Mammary epithelial cell (primary cell): ENCODE measurements at regions of chrX and their contacts with region 1.

Region 1: DNA sequence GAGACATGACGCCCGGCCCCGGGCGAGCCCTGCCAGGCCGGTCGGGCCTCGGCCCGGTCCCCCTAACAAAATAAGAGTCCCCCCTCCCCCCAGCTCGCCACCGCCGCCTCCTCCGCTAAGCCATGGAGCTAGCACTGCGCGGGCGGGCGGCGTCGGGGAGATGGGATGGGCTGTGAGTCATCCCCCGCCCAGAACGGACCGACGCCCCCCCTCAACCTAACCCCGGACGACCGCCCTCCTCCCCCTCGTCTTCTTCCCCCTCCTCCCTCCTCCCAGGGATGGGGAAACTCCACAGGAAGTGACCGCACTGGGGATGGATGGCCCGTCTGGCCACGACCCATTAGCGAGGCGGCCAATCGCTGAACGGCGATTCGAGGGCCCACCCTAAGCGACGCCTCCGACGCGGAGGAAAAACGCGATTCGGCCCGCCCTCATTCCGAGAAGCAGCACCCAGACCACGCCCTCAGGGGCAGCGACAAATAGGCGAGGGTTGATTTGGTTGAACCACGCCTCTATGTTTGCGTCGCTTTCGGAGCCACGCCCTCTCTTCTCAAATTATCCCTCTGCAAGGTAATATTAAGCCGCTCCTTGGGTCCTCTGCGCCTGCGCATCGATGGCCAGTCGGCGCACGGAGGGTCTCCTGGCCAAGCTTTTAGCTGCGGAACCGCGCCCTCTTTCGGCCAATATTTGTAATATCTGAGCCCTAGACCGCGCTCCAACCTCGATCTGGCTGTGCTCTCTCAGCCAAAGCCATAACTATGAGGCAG is at the start of gene TFE3:
- DNase-seq: peak; percentile 98
- H3K4me3 ChIP-seq: peak within 1 kb of the TSS; percentile 39 to 71 (median 51)
- H3K27ac ChIP-seq: peak within 1 kb of the TSS; percentile 73
- H3K4me1 ChIP-seq: peaks cover 12% of the 10 kb centered on the region
- H3K27me3 ChIP-seq: no peaks in the 10 kb centered on the region
- CTCF ChIP-seq: peak; percentile 39 to 58
- total RNA-seq, gene TFE3: 30.5 to 61.1 TPM

Region 2: GRCh38 chrX:48761674-48762471 is 281.5 kb before region 1 on chrX and contains the start of gene GLOD5:
- CTCF ChIA-PET with region 1: no interaction called
- dilution Hi-C with region 1: no loop called
- in situ Hi-C with region 1: no loop called
- intact Hi-C with region 1: loop called (anchors 2 kb)
- DNase-seq: peak; percentile 57
- H3K4me3 ChIP-seq: no peak within 1 kb of the TSS
- H3K27ac ChIP-seq: no peak within 1 kb of the TSS
- H3K4me1 ChIP-seq: no peaks in the 10 kb centered on the region
- H3K27me3 ChIP-seq: no peaks in the 10 kb centered on the region
- CTCF ChIP-seq: peak; percentile 27 to 57
- total RNA-seq, gene GLOD5: not detected

Region 3: GRCh38 chrX:48891402-48892288 is 151.8 kb before region 1 on chrX:
- CTCF ChIA-PET with region 1: no interaction called
- dilution Hi-C with region 1: no loop called
- in situ Hi-C with region 1: no loop called
- intact Hi-C with region 1: loop called (anchors 1 kb)
- DNase-seq: peak; percentile 85
- H3K4me3 ChIP-seq: peak overlapping the region; percentile 48 to 51 (median 49)
- H3K27ac ChIP-seq: no peak overlapping the region
- H3K4me1 ChIP-seq: peaks cover 4% of the 10 kb centered on the region
- H3K27me3 ChIP-seq: no peaks in the 10 kb centered on the region
- CTCF ChIP-seq: peak; percentile 24 to 55

Region 4: GRCh38 chrX:48911412-48912182 is 131.8 kb before region 1 on chrX and contains the start of gene SLC35A2:
- CTCF ChIA-PET with region 1: no interaction called
- dilution Hi-C with region 1: no loop called
- in situ Hi-C with region 1: no loop called
- intact Hi-C with region 1: no loop called
- DNase-seq: peak; percentile 80
- H3K4me3 ChIP-seq: peak within 1 kb of the TSS; percentile 59 to 77 (median 73)
- H3K27ac ChIP-seq: peak within 1 kb of the TSS; percentile 72
- H3K4me1 ChIP-seq: no peaks in the 10 kb centered on the region
- H3K27me3 ChIP-seq: no peaks in the 10 kb centered on the region
- CTCF ChIP-seq: no peak
- total RNA-seq, gene SLC35A2: 26.2 to 39.9 TPM

Region 5: DNA sequence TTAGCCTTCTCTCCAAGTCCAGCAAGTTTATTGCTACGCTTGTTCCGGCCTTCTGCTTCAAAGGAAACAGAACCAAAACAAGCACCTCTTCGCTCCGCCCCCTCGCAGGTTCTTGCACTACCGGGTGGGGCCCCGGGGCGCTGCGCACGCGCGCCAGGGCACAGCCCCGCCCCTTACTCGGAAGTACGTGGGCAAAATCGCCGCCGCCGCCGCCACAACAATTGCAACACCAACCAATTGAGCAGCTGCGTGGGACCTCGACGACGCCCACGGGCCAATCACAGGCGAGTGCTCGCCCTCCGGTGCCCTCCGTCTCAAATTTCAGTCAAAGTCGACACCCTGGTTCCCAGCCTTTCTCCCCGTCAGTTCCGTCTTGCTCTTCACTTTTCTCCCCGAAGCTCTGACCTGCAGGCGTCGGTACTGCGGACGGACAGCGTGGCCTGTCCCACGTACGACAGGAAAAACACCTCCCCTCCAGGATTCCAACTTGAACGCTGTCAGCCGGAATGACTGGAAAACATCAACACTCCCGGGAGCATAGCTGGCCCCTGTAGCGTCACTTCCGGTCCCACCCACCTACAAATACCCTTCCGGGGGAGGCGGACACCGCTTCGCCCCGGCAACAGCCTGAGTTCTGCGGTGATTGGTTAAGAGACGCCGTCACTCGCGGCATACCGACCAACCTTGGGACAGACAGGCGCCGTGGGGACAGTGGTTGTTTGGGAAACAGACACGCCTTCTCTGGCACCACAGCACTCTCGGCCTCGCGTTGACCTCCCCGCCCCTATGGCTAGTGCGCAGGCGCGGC is 85.4 kb before region 1 on chrX:
- CTCF ChIA-PET with region 1: no interaction called
- dilution Hi-C with region 1: loop called (anchors 5 kb)
- in situ Hi-C with region 1: no loop called
- intact Hi-C with region 1: loop called (anchors 2 kb)
- DNase-seq: peak; percentile 95
- H3K4me3 ChIP-seq: peak overlapping the region; percentile 67 to 75 (median 74)
- H3K27ac ChIP-seq: peak overlapping the region; percentile 97
- H3K4me1 ChIP-seq: no peaks in the 10 kb centered on the region
- H3K27me3 ChIP-seq: no peaks in the 10 kb centered on the region
- CTCF ChIP-seq: no peak

Region 6: DNA sequence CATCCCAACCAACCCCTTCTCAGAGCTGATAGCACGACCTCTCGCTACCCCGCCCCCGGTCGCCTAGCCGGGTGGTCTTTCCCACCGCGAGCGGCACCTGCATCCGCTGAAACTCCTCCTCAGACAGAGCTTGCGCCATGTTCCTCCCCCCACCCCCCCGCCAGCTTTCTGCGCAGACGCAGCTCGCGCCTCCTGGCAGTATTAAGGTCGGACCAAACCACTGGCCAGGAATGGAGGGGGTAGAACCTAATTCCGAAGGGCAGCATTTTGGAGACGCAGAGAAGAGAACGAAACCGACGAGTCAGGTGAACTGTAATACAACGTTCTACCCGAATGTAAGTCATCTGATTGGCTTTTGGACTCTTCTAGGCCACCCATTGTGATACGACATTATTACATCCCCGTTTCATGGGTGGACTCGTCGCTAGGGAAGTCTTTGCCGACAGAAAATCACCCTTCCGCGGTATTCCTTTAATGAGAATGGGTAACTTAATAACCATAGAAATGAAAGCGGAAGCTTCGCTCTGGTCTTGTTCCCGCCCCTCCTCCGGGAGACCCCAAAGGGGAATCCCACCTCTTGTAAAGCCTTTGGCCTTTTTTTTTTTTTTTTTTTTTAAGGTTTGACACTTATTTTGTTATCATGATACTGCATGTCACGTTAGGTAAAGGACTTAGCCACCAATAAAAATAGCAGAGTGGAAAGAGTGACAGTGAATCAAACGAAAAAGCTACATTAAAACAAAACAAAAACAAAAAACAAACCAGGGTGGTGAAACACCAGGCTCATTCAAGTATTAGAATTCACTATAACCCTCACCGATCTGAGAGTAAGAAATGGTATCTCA is 41.1 kb before region 1 on chrX and contains the start of gene GRIPAP1:
- CTCF ChIA-PET with region 1: no interaction called
- dilution Hi-C with region 1: no loop called
- in situ Hi-C with region 1: no loop called
- intact Hi-C with region 1: loop called (anchors 1 kb)
- DNase-seq: peak; percentile 79
- H3K4me3 ChIP-seq: peak within 1 kb of the TSS; percentile 63 to 73 (median 70)
- H3K27ac ChIP-seq: peak within 1 kb of the TSS; percentile 93
- H3K4me1 ChIP-seq: no peaks in the 10 kb centered on the region
- H3K27me3 ChIP-seq: no peaks in the 10 kb centered on the region
- CTCF ChIP-seq: no peak
- total RNA-seq, gene GRIPAP1: 16.5 to 42.7 TPM

Region 7: DNA sequence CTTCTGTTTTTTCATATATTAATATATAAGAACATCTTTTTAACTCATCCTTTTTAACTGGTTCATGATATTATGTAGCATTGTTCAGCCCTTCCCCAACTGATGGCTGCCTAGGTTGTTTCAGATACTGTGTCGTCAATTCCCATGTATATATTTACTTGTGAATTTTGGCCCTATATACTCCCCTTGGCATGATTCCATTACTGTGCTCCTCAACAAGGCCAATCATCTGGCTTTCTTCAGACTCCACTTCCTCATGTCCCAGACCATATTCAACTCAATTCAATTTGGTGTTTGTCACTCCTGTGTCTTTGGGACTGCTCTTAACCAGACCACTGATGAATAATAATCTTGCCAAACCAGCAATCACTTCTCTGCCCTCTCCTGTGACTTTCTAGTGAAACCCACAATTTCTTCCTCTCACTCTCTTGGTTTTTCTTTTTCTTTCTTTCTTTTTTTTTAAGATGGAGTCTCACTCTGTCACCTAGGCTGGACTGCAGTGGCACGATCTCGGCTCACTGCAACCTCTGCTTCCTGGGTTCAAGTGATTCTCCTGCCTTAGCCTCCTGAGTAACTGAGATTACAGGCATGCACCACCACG is 39.0 kb after region 1 on chrX:
- CTCF ChIA-PET with region 1: no interaction called
- dilution Hi-C with region 1: no loop called
- in situ Hi-C with region 1: no loop called
- intact Hi-C with region 1: no loop called
- DNase-seq: no peak
- H3K4me3 ChIP-seq: no peak overlapping the region
- H3K27ac ChIP-seq: no peak overlapping the region
- H3K4me1 ChIP-seq: no peaks in the 10 kb centered on the region
- H3K27me3 ChIP-seq: no peaks in the 10 kb centered on the region
- CTCF ChIP-seq: no peak

Region 8: GRCh38 chrX:49100704-49101628 is 57.6 kb after region 1 on chrX:
- CTCF ChIA-PET with region 1: no interaction called
- dilution Hi-C with region 1: loop called (anchors 5 kb)
- in situ Hi-C with region 1: no loop called
- intact Hi-C with region 1: loop called (anchors 5 kb)
- DNase-seq: peak; percentile 89
- H3K4me3 ChIP-seq: peak overlapping the region; percentile 40 to 75 (median 63)
- H3K27ac ChIP-seq: peak overlapping the region; percentile 38
- H3K4me1 ChIP-seq: peaks cover 3% of the 10 kb centered on the region
- H3K27me3 ChIP-seq: no peaks in the 10 kb centered on the region
- CTCF ChIP-seq: no peak

Region 9: GRCh38 chrX:49165901-49166881 is 122.8 kb after region 1 on chrX:
- CTCF ChIA-PET with region 1: no interaction called
- dilution Hi-C with region 1: no loop called
- in situ Hi-C with region 1: no loop called
- intact Hi-C with region 1: loop called (anchors 2 kb)
- DNase-seq: peak; percentile 88
- H3K4me3 ChIP-seq: peak overlapping the region; percentile 18 to 50 (median 48)
- H3K27ac ChIP-seq: peak overlapping the region; percentile 81
- H3K4me1 ChIP-seq: peaks cover 7% of the 10 kb centered on the region
- H3K27me3 ChIP-seq: no peaks in the 10 kb centered on the region
- CTCF ChIP-seq: peak in 1 of 2 donors; percentile 47